CD4-positive, alpha-beta T cell (primary cell): ENCODE measurements at regions of chr16 and their contacts with region 1.

Region 1: DNA sequence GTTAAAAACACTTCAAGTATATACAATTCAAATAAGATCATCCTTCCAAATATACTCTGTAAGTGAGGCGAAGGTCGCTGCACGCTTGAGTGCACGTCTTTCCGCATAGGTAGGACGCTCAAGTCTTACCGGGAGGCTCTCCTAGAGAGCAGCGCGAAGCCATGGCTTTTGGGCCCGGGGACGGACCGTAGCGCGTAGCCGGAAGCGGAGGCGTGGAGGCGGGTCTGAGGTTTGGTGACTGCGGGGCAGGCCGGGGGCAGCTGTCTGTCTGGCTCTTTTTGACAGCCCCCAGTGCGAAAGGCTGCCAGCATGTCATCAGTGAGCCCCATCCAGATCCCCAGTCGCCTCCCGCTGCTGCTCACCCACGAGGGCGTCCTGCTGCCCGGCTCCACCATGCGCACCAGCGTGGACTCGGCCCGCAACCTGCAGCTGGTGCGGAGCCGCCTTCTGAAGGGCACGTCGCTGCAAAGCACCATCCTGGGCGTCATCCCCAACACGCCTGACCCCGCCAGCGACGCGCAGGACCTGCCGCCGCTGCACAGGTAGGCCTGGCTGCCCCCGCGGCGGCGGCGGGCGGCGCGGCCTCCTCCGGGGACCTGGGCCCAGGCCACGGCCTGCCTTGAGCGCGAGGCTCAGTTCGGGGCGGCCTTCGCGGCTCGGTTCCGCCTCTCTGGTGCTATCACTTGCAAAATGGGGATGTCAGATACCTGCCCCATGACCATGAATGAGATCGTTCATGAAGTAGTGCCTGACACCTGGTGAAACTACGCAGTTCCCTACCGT is at the start of gene LONP2:
- DNase-seq: peak; percentile 81 to 94 (median 87)
- ATAC-seq: peak; percentile 95
- H3K4me3 ChIP-seq: peak within 1 kb of the TSS; percentile 86
- H3K4me3 Mint-ChIP-seq: peak within 1 kb of the TSS; percentile 90
- H3K27ac ChIP-seq: peak within 1 kb of the TSS; percentile 78
- H3K27ac Mint-ChIP-seq: peak within 1 kb of the TSS; percentile 89
- H3K4me1 ChIP-seq: peaks cover 43% of the 10 kb centered on the region
- H3K4me1 Mint-ChIP-seq: peaks cover 49% of the 10 kb centered on the region
- H3K27me3 ChIP-seq: no peaks in the 10 kb centered on the region
- H3K27me3 Mint-ChIP-seq: no peaks in the 10 kb centered on the region
- CTCF ChIP-seq: no peak
- total RNA-seq, gene LONP2: 77.2 to 81.0 TPM

Region 2: GRCh38 chr16:46830902-46831647 is 1413.2 kb before region 1 on chr16 and contains the start of gene C16orf87:
- CTCF ChIA-PET with region 1: no interaction called
- POLR2A ChIA-PET with region 1: no interaction called
- intact Hi-C with region 1: loop called in 1 of 2 experiments (anchors 5 kb)
- DNase-seq: peak; percentile 81 to 96 (median 90)
- ATAC-seq: peak; percentile 91
- H3K4me3 ChIP-seq: peak within 1 kb of the TSS; percentile 87
- H3K4me3 Mint-ChIP-seq: peak within 1 kb of the TSS; percentile 98
- H3K27ac ChIP-seq: peak within 1 kb of the TSS; percentile 45 to 61
- H3K27ac Mint-ChIP-seq: peak within 1 kb of the TSS; percentile 89
- H3K4me1 ChIP-seq: peaks cover 11% of the 10 kb centered on the region
- H3K4me1 Mint-ChIP-seq: peaks cover 36% of the 10 kb centered on the region
- H3K27me3 ChIP-seq: no peaks in the 10 kb centered on the region
- H3K27me3 Mint-ChIP-seq: no peaks in the 10 kb centered on the region
- CTCF ChIP-seq: no peak
- total RNA-seq, gene C16orf87: 20.6 to 22.6 TPM

Region 3: DNA sequence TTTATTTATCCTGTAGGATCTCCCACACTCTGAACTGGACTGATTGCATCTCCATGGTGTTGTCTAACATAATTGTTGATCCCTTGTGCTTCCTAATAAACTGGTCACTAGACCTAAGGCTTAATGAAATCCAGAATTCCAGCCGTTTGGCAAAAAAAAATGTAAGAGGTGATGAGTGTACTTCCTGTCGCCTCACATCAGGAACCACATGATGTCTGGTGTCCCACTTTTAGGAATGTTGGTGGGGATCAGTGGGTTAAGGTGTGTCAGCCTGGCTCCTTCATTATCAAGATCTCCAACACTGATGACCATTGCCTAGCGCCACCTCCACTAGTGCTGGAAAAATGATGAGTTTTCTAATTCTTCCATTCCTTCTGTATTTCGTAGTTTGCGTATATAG is 18.8 kb before region 1 on chr16:
- CTCF ChIA-PET with region 1: no interaction called
- POLR2A ChIA-PET with region 1: no interaction called
- intact Hi-C with region 1: no loop called
- DNase-seq: no peak
- ATAC-seq: no peak
- H3K4me3 ChIP-seq: no peak overlapping the region
- H3K4me3 Mint-ChIP-seq: no peak overlapping the region
- H3K27ac ChIP-seq: no peak overlapping the region
- H3K27ac Mint-ChIP-seq: no peak overlapping the region
- H3K4me1 ChIP-seq: no peaks in the 10 kb centered on the region
- H3K4me1 Mint-ChIP-seq: no peaks in the 10 kb centered on the region
- H3K27me3 ChIP-seq: no peaks in the 10 kb centered on the region
- H3K27me3 Mint-ChIP-seq: peaks cover 20% of the 10 kb centered on the region
- CTCF ChIP-seq: no peak

Region 4: DNA sequence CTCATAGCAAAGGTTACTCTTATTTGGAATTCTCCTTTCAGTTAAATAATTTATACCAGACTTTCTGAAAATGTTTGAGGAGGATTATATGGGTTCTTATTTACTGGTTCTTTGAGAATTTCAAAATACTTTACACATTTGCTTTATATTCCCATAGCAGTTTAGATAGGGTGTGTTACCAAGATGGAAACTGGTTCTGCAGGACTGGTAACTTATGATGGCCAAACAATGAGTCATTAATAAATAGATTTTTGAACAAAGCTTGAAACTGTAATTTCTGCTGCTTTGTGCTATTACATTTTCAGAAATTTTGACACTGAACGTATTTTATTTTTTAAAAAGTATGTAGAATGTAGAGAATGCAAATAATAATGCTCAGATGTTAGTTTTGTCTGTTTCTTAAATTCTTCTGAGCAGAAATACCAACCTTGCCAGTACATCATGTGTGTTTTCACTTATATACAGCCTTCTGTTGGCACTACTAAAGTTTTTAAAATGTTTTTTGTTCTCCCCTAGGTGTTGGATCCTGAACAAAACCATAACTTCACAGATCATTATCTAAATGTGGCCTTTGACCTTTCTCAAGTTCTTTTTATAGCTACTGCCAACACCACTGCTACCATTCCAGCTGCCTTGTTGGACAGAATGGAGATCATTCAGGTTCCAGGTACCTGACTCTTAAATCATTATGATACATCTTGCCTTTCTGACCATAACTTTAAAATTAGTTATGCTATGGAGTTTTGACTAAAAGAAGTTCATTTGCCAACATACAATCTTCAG is 51.4 kb after region 1 on chr16:
- CTCF ChIA-PET with region 1: no interaction called
- POLR2A ChIA-PET with region 1: no interaction called
- intact Hi-C with region 1: no loop called
- DNase-seq: no peak
- ATAC-seq: no peak
- H3K4me3 ChIP-seq: no peak overlapping the region
- H3K4me3 Mint-ChIP-seq: no peak overlapping the region
- H3K27ac ChIP-seq: no peak overlapping the region
- H3K27ac Mint-ChIP-seq: no peak overlapping the region
- H3K4me1 ChIP-seq: no peaks in the 10 kb centered on the region
- H3K4me1 Mint-ChIP-seq: peaks cover 10% of the 10 kb centered on the region
- H3K27me3 ChIP-seq: no peaks in the 10 kb centered on the region
- H3K27me3 Mint-ChIP-seq: no peaks in the 10 kb centered on the region
- CTCF ChIP-seq: no peak

Region 5: DNA sequence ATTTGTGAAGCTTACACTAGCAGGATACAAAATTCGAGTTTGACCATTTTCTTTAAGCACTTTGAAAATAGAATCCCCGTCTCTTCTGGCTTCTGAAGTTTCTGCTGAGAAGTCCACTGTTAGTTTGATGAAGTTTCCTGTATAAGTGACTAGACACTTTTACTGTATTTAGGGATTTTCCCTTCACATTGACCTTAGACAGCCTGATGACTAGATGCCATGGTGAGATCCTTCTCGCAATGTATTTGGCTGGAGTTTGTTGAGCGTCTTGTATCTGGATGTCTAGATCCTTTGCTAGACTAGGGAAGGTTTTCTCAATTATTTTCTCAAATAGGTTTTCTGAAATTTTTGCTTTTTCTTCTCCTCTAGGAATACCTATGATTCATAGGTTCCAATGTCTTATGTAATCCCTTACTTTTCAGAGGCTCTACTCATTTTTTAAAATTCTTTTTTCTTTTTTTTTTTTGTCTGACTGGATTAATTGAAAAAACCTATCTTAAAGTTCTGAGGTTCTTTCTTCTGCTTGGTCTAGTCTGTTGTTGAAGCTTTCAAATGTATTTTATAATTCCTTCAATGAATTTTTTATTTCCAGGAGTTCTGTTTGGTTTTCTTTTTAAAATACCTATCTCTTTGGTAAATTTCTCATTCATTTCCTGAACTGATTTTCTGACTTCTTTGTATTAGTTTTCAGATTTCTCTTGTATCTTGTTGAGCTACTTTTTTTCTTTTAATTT is 66.8 kb after region 1 on chr16:
- CTCF ChIA-PET with region 1: no interaction called
- POLR2A ChIA-PET with region 1: no interaction called
- intact Hi-C with region 1: loop called (anchors 5 kb)
- DNase-seq: no peak
- ATAC-seq: no peak
- H3K4me3 ChIP-seq: no peak overlapping the region
- H3K4me3 Mint-ChIP-seq: no peak overlapping the region
- H3K27ac ChIP-seq: no peak overlapping the region
- H3K27ac Mint-ChIP-seq: no peak overlapping the region
- H3K4me1 ChIP-seq: no peaks in the 10 kb centered on the region
- H3K4me1 Mint-ChIP-seq: peaks cover 22% of the 10 kb centered on the region
- H3K27me3 ChIP-seq: no peaks in the 10 kb centered on the region
- H3K27me3 Mint-ChIP-seq: no peaks in the 10 kb centered on the region
- CTCF ChIP-seq: no peak

Region 6: DNA sequence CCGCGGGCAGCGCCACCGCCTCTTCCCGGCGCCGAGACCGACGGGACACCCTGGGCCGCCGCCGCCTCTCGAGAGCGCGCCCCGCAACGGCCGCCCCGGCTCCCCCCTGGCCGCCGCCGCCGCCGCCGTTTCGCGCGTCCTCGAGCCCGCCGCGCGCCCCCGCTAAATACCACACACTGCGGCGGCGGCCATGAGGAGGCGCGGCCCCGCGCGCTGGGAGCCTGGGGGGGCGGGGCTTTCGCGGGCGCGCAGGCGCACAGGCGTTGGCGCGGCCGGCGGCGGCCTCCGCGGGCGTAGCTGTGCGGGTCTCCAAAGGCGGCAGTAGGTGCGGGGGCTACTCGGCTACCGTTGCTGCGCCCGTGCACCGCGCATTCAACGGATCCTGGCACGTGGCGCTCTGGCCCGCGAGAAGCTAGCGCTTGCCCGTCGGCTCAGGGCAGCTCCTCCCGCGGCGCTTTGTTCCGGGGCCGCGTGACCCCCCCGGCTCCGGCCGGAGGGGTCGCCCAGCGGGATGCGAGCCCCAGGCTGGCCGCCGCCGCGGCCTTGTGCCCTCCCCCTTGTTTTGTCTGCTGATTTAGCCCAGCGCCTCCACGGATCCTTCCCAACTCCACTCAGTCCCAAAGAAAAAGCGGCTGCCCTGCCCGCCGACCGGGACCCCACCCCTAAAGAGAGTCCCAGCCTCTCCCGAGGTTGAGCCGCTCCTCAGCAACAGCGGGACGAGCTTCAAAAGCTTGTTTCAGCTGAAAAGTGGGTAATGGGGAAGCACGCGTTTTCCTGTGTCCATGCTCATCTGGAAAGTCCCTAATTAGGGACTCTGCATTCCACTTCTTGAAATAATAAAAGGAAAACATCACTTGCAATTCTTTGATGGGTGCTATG is 141.2 kb after region 1 on chr16 and contains the start of gene SIAH1:
- CTCF ChIA-PET with region 1: no interaction called
- POLR2A ChIA-PET with region 1: no interaction called
- intact Hi-C with region 1: loop called in 1 of 2 experiments (anchors 5 kb)
- DNase-seq: peak; percentile 73 to 96 (median 86)
- ATAC-seq: peak; percentile 80
- H3K4me3 ChIP-seq: peak within 1 kb of the TSS; percentile 81
- H3K4me3 Mint-ChIP-seq: peak within 1 kb of the TSS; percentile 98
- H3K27ac ChIP-seq: peak within 1 kb of the TSS in 1 of 2 donors; percentile 46
- H3K27ac Mint-ChIP-seq: peak within 1 kb of the TSS; percentile 92
- H3K4me1 ChIP-seq: peaks cover 12% of the 10 kb centered on the region
- H3K4me1 Mint-ChIP-seq: peaks cover 27% of the 10 kb centered on the region
- H3K27me3 ChIP-seq: no peaks in the 10 kb centered on the region
- H3K27me3 Mint-ChIP-seq: no peaks in the 10 kb centered on the region
- CTCF ChIP-seq: no peak
- total RNA-seq, gene SIAH1: 40.9 to 43.0 TPM

Region 7: DNA sequence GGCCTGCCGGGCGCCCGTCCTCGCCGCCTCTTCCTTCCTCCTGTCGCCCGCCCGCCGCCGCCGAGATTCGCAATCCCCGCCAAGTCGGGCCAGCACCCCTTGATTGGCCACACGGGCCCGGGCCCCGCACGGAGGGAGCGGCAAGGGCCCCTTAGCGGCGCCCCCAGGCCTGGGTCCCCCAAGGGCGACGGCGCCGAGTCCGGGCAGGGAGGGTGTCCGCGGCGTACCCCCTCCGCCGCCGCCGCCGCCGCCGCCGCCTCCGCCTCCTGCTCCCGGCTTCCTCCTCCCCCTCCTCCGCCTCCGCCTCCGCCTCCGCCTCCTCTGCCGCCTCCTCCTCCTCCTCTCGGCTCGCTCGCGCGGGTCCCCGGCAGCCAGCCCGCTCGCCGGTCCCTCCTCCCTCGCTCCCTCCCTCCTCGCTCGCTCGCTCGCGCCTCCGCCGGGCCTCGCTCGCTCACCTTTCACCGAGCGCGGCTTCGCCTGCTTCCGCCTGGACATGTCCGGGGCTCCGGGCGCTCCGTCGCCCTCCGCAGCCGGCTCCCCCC is 1611.1 kb after region 1 on chr16:
- CTCF ChIA-PET with region 1: no interaction called
- POLR2A ChIA-PET with region 1: no interaction called
- intact Hi-C with region 1: loop called in 1 of 2 experiments (anchors 10 kb)
- DNase-seq: peak; percentile 38 to 78 (median 61)
- ATAC-seq: peak; percentile 62
- H3K4me3 ChIP-seq: peak overlapping the region; percentile 24
- H3K4me3 Mint-ChIP-seq: peak overlapping the region; percentile 30
- H3K27ac ChIP-seq: no peak overlapping the region
- H3K27ac Mint-ChIP-seq: no peak overlapping the region
- H3K4me1 ChIP-seq: peaks cover 38% of the 10 kb centered on the region
- H3K4me1 Mint-ChIP-seq: peaks cover 13% of the 10 kb centered on the region
- H3K27me3 ChIP-seq: peaks cover 38 to 56% of the 10 kb centered on the region in 2 experiments
- H3K27me3 Mint-ChIP-seq: peaks cover 53% of the 10 kb centered on the region
- CTCF ChIP-seq: no peak